ENCODE measurements at regions of chr16 and their contacts with region 1.

Region 1: DNA sequence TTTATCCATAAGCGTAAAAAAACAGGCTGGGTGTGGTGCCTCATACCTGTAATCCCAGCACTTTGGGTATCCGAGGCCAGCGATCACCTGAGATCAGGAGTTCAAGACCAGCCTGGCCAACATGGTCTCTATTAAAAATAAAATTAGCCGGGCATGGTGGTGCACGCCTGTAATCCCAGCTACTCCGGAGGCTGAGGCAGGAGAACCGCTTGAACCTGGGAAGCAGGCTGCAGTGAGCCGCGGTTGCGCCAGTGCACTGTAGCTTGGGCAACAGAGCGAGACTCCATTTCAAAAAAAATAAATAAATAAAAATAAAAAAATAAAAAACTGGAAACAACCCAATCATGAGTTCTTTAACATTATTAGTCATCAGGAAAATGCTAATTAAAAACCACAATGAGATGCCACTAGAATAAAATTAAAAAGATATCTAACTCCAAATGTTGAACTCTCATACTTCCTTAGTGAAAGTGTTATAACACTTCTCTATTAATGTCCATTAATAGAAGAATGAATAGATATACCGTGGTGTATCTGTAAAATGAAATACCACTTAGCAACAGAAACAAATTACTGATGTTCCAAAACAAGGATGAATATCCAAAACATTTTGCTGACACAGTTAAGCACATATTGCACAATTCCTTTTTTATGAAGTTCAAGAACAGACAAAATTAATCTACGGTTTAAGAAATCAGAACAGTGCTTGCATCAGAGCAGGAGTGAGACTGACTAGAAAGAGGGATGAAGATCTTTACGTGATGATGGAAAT is 13.1 kb downstream of the MPHOSPH6 start:
- DNase-seq: no peak
- H3K4me3 ChIP-seq: no peak overlapping the region
- H3K27ac ChIP-seq: no peak overlapping the region
- H3K4me1 ChIP-seq: peaks cover 0 to 16% (median 13%) of the 10 kb centered on the region in 4 donors
- H3K27me3 ChIP-seq: no peaks in the 10 kb centered on the region
- CTCF ChIP-seq: no peak
- EP300 ChIP-seq: no peak
- POLR2A ChIP-seq: no peak

Region 2: GRCh38 chr16:82111944-82112343 is 45.0 kb before region 1 on chr16:
- intact Hi-C with region 1: no loop called
- DNase-seq: no peak
- H3K4me3 ChIP-seq: no peak overlapping the region
- H3K27ac ChIP-seq: no peak overlapping the region
- H3K4me1 ChIP-seq: peaks cover 0 to 7% (median 0%) of the 10 kb centered on the region in 4 donors
- H3K27me3 ChIP-seq: no peaks in the 10 kb centered on the region
- CTCF ChIP-seq: no peak
- EP300 ChIP-seq: no peak
- POLR2A ChIP-seq: no peak

Region 3: GRCh38 chr16:82192665-82193064 is 35.7 kb after region 1 on chr16:
- intact Hi-C with region 1: loop called (anchors 5 kb)
- DNase-seq: no peak
- H3K4me3 ChIP-seq: no peak overlapping the region
- H3K27ac ChIP-seq: peak overlapping the region in 1 of 4 donors; percentile 44
- H3K4me1 ChIP-seq: peaks cover 0 to 35% (median 22%) of the 10 kb centered on the region in 4 donors
- H3K27me3 ChIP-seq: no peaks in the 10 kb centered on the region
- CTCF ChIP-seq: no peak
- EP300 ChIP-seq: peak in 2 of 4 donors; percentile 22 to 31
- POLR2A ChIP-seq: no peak

Measured in sigmoid colon (tissue), 7 donors.